ENCODE measurements at regions of chr12 and their contacts with region 1.

Region 1: GRCh38 chr12:21169878-21170472 is 39.0 kb downstream of the SLCO1B1 start:
- DNase-seq: no peak
- ATAC-seq: no peak
- H3K4me3 ChIP-seq: no peak overlapping the region
- H3K27ac ChIP-seq: no peak overlapping the region
- H3K4me1 ChIP-seq: no peaks in the 10 kb centered on the region
- H3K27me3 ChIP-seq: no peaks in the 10 kb centered on the region

Region 2: DNA sequence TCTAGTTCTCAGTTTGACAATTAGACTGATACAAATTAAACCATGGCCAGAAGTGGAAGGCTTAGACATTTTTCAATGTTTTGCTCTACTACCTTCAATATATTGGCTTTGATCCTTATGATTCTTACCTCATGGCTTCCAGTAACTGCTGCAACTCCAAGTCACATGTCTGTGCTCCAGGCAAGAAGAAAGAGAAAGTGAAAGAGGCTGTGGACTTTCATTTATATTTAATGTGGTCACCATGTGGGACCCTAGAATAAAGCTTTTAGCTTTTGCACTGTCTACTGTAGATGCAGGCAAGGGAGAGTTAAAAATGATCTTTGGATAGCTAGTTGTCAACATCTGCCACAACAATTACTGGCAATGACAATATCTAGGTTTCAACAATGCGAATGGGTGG is 1015.9 kb before region 1 on chr12:
- intact Hi-C with region 1: no loop called
- DNase-seq: no peak
- ATAC-seq: no peak
- H3K4me3 ChIP-seq: no peak overlapping the region
- H3K27ac ChIP-seq: peak overlapping the region in 1 of 2 donors; percentile 17
- H3K4me1 ChIP-seq: no peaks in the 10 kb centered on the region
- H3K27me3 ChIP-seq: no peaks in the 10 kb centered on the region

Region 3: GRCh38 chr12:20740972-20741371 is 429.0 kb before region 1 on chr12:
- intact Hi-C with region 1: no loop called
- DNase-seq: no peak
- ATAC-seq: no peak
- H3K4me3 ChIP-seq: no peak overlapping the region
- H3K27ac ChIP-seq: no peak overlapping the region
- H3K4me1 ChIP-seq: no peaks in the 10 kb centered on the region
- H3K27me3 ChIP-seq: no peaks in the 10 kb centered on the region

Region 4: DNA sequence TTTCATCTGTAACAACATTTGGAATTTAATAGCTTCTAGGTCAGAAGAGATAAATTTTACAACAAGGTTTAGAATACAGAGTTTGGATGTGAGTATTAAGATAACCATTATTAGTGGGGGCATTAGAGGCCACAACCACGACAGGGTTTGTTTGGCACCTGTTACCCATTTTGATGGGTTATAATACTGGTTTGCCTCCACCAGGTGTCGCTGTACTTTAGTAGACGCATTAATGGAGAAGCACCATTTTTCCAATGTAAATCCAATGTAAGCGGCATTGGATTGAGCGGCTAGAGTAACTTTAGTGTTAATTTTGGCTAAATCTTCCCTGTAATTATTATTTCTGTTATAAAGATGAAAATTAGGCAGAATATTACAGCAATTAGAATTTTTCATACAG is 223.2 kb before region 1 on chr12:
- intact Hi-C with region 1: loop called in 1 of 2 experiments (anchors 5 kb)
- DNase-seq: no peak
- ATAC-seq: no peak
- H3K4me3 ChIP-seq: no peak overlapping the region
- H3K27ac ChIP-seq: no peak overlapping the region
- H3K4me1 ChIP-seq: no peaks in the 10 kb centered on the region
- H3K27me3 ChIP-seq: no peaks in the 10 kb centered on the region

Region 5: GRCh38 chr12:21429994-21430393 is 260.0 kb after region 1 on chr12:
- intact Hi-C with region 1: no loop called
- DNase-seq: no peak
- ATAC-seq: no peak
- H3K4me3 ChIP-seq: no peak overlapping the region
- H3K27ac ChIP-seq: no peak overlapping the region
- H3K4me1 ChIP-seq: no peaks in the 10 kb centered on the region
- H3K27me3 ChIP-seq: no peaks in the 10 kb centered on the region

Measured in aorta (tissue), 5 donors.